IMR-90 (cell line): ENCODE measurements at regions of chrX and their contacts with region 1.

Region 1: DNA sequence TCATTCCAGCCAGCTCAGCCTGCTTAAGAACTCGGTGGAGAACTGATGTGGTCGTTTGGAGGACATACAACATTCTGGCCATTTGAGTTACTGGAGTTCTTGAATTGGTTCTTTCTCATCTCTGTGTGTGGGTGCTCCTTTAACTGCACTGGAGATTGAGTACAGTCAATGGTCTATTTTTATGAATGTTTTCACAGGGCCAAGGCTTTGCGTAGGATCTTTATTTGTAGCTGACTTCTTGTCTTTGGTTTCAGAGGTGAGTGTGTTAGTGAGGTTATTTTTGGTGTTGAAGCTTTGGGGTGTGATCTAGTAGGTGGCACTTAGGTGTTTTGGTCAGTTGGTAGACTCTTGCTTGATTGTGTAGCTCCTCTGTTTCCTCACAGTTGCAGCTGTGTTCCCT is 288.4 kb downstream of the LHFPL1 start:
- DNase-seq: no peak
- ATAC-seq: no peak
- H3K4me3 ChIP-seq: no peak overlapping the region
- H3K27ac ChIP-seq: no peak overlapping the region
- H3K4me1 ChIP-seq: no peaks in the 10 kb centered on the region
- H3K27me3 ChIP-seq: peaks cover 4% of the 10 kb centered on the region
- CTCF ChIP-seq: no peak
- POLR2A ChIP-seq: no peak
- RAD21 ChIP-seq: no peak

Region 2: DNA sequence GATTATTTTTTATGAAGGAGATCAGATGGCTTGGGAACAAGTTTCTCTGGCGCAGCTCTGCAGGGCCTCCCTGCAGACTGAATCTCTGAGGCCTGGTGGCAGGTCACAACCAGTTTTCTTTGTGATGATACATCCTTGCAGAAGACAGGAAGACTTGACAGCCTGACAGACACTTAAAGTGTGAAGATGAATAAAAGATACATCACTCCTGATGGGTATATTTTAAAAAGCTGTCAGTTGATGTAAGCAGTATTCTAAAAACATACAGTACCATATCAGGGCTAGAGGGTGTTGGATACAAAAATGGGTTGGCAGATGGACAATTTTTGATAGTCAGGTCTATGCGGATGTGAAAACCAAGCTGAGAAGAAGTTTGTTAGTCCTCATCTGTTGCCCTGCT is 49.0 kb after region 1 on chrX:
- CTCF ChIA-PET with region 1: no interaction called
- POLR2A ChIA-PET with region 1: no interaction called
- dilution Hi-C with region 1: no loop called
- in situ Hi-C with region 1: no loop called
- intact Hi-C with region 1: loop called (anchors 2 kb)
- DNase-seq: no peak
- ATAC-seq: no peak
- H3K4me3 ChIP-seq: no peak overlapping the region
- H3K27ac ChIP-seq: no peak overlapping the region
- H3K4me1 ChIP-seq: no peaks in the 10 kb centered on the region
- H3K27me3 ChIP-seq: no peaks in the 10 kb centered on the region; the same call in 1 of the 2 replicates
- CTCF ChIP-seq: no peak
- POLR2A ChIP-seq: no peak
- RAD21 ChIP-seq: no peak

Region 3: DNA sequence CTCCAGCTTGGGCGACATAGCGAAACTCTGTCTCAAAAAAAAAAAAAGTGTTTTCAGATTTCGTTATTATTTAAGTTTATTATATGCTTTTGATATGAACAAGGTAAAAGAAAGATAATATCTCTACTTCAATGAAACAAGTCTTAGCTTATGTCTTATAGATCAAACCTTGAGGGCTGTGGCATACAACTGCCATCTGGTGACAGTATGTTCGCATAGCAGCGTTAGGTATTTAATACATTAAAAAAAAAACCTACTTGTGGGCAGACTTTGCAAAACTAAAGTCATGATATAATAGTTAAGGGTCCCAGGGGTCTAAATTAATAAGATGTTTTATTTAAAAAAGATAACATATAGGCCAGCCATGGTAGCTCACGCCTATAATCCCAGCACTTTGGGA is 610.5 kb after region 1 on chrX:
- CTCF ChIA-PET with region 1: no interaction called
- POLR2A ChIA-PET with region 1: no interaction called
- dilution Hi-C with region 1: no loop called
- in situ Hi-C with region 1: no loop called
- intact Hi-C with region 1: no loop called
- DNase-seq: no peak
- ATAC-seq: no peak
- H3K4me3 ChIP-seq: no peak overlapping the region
- H3K27ac ChIP-seq: no peak overlapping the region
- H3K4me1 ChIP-seq: no peaks in the 10 kb centered on the region
- H3K27me3 ChIP-seq: no peaks in the 10 kb centered on the region; the same call in 1 of the 2 replicates
- CTCF ChIP-seq: no peak
- POLR2A ChIP-seq: no peak
- RAD21 ChIP-seq: no peak